Transverse colon (tissue), 4 donors: ENCODE measurements at regions of chrX and their contacts with region 1.

Region 1: DNA sequence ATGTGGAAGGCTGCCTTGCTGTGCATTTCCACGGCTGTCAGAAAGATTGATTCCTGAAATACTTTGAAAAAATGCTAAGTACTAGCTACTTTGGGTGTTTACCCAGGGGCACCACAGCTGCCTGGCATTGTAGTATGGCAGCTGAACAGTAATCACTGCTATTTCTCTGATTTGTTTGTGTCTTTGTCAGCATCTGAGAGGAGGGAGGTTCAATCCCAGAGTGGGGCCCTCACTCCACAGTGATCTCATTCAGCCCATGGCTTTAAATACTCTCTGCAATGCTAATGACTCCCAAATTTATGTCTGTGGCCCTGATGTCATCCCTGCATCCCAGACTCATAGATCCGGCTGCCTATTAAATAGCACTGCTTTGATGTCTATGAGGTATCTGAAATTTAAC is 575.3 kb upstream of the MAGEB2 start:
- DNase-seq: no peak
- H3K4me3 ChIP-seq: no peak overlapping the region
- H3K27ac ChIP-seq: no peak overlapping the region
- H3K4me1 ChIP-seq: no peaks in the 10 kb centered on the region
- H3K27me3 ChIP-seq: no peaks in the 10 kb centered on the region
- CTCF ChIP-seq: no peak
- EP300 ChIP-seq: no peak
- POLR2A ChIP-seq: no peak

Region 2: GRCh38 chrX:29295987-29296680 is 344.0 kb before region 1 on chrX:
- in situ Hi-C with region 1: no loop called
- intact Hi-C with region 1: no loop called
- DNase-seq: no peak
- H3K4me3 ChIP-seq: no peak overlapping the region
- H3K27ac ChIP-seq: no peak overlapping the region
- H3K4me1 ChIP-seq: no peaks in the 10 kb centered on the region
- H3K27me3 ChIP-seq: no peaks in the 10 kb centered on the region
- CTCF ChIP-seq: no peak
- EP300 ChIP-seq: no peak
- POLR2A ChIP-seq: no peak

Region 3: GRCh38 chrX:29948653-29949052 is 308.5 kb after region 1 on chrX:
- in situ Hi-C with region 1: no loop called
- intact Hi-C with region 1: no loop called
- DNase-seq: no peak
- H3K4me3 ChIP-seq: no peak overlapping the region
- H3K27ac ChIP-seq: no peak overlapping the region
- H3K4me1 ChIP-seq: no peaks in the 10 kb centered on the region
- H3K27me3 ChIP-seq: no peaks in the 10 kb centered on the region
- CTCF ChIP-seq: no peak
- EP300 ChIP-seq: no peak
- POLR2A ChIP-seq: no peak

Region 4: GRCh38 chrX:30230395-30230794 is 590.3 kb after region 1 on chrX and contains the start of gene MAGEB3:
- in situ Hi-C with region 1: no loop called
- intact Hi-C with region 1: loop called (anchors 5 kb)
- DNase-seq: no peak
- H3K4me3 ChIP-seq: no peak within 1 kb of the TSS
- H3K27ac ChIP-seq: no peak within 1 kb of the TSS
- H3K4me1 ChIP-seq: no peaks in the 10 kb centered on the region
- H3K27me3 ChIP-seq: no peaks in the 10 kb centered on the region
- CTCF ChIP-seq: no peak
- EP300 ChIP-seq: no peak
- POLR2A ChIP-seq: no peak
- total RNA-seq, gene MAGEB3: not detected